ENCODE measurements at regions of chr7 and their contacts with region 1.

Region 1: DNA sequence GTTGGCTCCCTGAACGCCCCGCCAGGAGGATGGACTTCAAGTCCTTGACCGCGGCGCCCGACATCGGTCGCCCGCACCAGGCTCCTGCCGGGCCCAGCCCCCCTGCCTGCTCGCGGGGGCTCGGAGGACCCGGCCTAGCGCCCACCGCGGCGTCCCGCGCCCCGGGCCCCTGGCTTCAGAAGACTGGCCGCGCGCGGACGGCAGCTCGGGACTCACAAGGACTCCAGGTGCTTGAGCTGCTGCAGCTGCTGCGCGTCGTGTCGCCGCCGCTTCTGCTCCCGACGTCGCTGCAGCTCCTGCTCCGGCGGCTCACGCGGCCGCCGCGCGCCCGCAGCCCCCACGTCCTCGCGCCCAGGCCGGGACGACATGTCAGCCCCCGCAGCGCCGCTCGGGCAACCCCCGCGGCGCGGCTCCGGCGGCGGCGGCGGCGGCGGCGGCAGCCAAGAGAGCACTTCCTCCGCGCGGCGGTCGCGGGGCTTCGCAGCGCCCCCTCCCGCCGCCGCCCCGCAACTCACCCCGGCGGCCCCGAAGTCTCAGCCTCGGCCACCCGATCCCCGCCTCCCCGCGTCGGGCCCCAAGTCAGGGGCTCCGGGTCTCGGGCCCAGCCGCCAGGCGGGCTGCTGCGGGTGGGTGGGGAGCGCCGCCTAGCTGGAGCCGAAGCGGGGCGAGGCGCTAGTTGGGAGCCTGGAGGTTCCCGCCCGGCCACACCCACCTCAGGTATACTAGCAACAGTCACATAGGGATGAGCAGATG is at the start of gene RP9:
- DNase-seq: peak; percentile 91
- ATAC-seq: peak; percentile 88
- H3K4me3 ChIP-seq: peak within 1 kb of the TSS; percentile 63 to 94 (median 74)
- H3K4me3 Mint-ChIP-seq: peak within 1 kb of the TSS; percentile 95
- H3K27ac ChIP-seq: peak within 1 kb of the TSS; percentile 34 to 91
- H3K27ac Mint-ChIP-seq: peak within 1 kb of the TSS; percentile 79
- H3K4me1 ChIP-seq: peaks cover 42 to 45% of the 10 kb centered on the region in 2 donors
- H3K4me1 Mint-ChIP-seq: peaks cover 46% of the 10 kb centered on the region
- H3K27me3 ChIP-seq: peaks cover 0 to 4% (median 0%) of the 10 kb centered on the region in 4 experiments
- H3K27me3 Mint-ChIP-seq: peaks cover 14% of the 10 kb centered on the region
- CTCF ChIP-seq: peak; percentile 70
- total RNA-seq, gene RP9: 23.0 and 27.0 TPM in 2 replicates

Region 2: DNA sequence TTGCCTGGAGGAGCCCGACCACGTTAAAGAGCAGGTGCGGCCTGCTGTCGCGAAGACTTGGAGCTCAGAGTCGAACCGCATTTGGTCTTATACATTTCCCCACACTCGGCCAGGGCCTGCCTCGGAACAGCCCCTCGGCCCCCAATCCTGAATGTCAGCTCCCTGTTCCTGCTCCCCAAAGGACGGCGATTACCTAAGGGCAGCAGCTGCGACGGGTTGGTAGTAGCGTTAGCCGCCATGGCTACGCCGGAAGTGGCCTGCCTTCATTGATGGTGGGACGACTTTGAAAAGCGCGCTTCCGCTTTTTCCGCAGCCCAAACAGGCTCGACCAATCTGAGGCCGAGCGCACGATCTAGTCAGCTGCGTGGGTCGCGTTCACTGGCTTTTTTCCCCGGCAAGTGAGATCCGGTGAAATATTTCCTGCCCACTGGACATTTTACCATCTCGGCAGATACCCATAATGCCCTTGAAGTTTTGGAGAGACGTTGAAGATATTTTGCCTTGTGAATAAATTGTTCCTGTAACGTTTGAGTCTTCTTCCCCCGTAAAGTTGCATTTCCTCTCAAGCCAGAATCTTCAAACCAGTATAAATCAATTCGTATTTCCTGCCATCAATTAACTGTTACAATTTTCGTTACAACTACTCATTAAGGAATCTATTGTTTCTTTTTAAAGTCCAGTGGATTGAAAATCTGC is 618.9 kb before region 1 on chr7 and contains the start of gene LSM5:
- CTCF ChIA-PET with region 1: interaction called, 5 read pairs
- POLR2A ChIA-PET with region 1: interaction called, 12 read pairs
- intact Hi-C with region 1: loop called (anchors 2 kb)
- DNase-seq: peak; percentile 94
- ATAC-seq: peak; percentile 57
- H3K4me3 ChIP-seq: peak within 1 kb of the TSS; percentile 81 to 97 (median 91)
- H3K4me3 Mint-ChIP-seq: peak within 1 kb of the TSS; percentile 91
- H3K27ac ChIP-seq: peak within 1 kb of the TSS; percentile 78 to 87
- H3K27ac Mint-ChIP-seq: peak within 1 kb of the TSS; percentile 91
- H3K4me1 ChIP-seq: peaks cover 8 to 16% of the 10 kb centered on the region in 2 donors
- H3K4me1 Mint-ChIP-seq: peaks cover 28% of the 10 kb centered on the region
- H3K27me3 ChIP-seq: no peaks in the 10 kb centered on the region
- H3K27me3 Mint-ChIP-seq: no peaks in the 10 kb centered on the region
- CTCF ChIP-seq: no peak
- total RNA-seq, gene LSM5: 32.1 and 34.7 TPM in 2 replicates

Region 3: DNA sequence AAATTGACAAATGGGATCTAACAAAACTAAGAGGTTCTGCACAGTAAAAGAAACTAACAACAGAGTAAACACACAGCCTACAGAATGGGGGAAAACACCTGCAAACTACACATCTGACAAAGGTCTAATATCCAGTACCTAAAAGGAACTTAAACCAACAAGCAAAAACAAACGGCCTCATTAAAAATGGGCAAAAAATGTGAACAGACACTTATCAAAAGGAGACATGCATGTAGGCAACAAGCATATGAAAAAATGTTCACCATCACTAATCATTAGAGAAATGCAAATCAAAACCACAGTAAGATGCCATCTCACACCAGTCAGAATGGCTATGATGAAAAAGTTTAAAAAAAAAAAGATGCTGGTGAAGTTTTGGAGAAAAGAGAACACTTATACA is 415.0 kb before region 1 on chr7:
- CTCF ChIA-PET with region 1: interaction called, 10 read pairs
- POLR2A ChIA-PET with region 1: no interaction called
- intact Hi-C with region 1: loop called (anchors 2 kb)
- DNase-seq: no peak
- ATAC-seq: no peak
- H3K4me3 ChIP-seq: no peak overlapping the region
- H3K4me3 Mint-ChIP-seq: no peak overlapping the region
- H3K27ac ChIP-seq: no peak overlapping the region
- H3K27ac Mint-ChIP-seq: no peak overlapping the region
- H3K4me1 ChIP-seq: peaks cover 10 to 12% of the 10 kb centered on the region in 2 donors
- H3K4me1 Mint-ChIP-seq: peaks cover 16% of the 10 kb centered on the region
- H3K27me3 ChIP-seq: no peaks in the 10 kb centered on the region
- H3K27me3 Mint-ChIP-seq: no peaks in the 10 kb centered on the region
- CTCF ChIP-seq: no peak

Region 4: GRCh38 chr7:32803406-32804141 is 305.6 kb before region 1 on chr7:
- CTCF ChIA-PET with region 1: interaction called, 32 read pairs
- POLR2A ChIA-PET with region 1: no interaction called
- intact Hi-C with region 1: no loop called
- DNase-seq: no peak
- ATAC-seq: no peak
- H3K4me3 ChIP-seq: no peak overlapping the region
- H3K4me3 Mint-ChIP-seq: no peak overlapping the region
- H3K27ac ChIP-seq: no peak overlapping the region
- H3K27ac Mint-ChIP-seq: no peak overlapping the region
- H3K4me1 ChIP-seq: no peaks in the 10 kb centered on the region
- H3K4me1 Mint-ChIP-seq: peaks cover 2% of the 10 kb centered on the region
- H3K27me3 ChIP-seq: peaks cover 0 to 3% (median 0%) of the 10 kb centered on the region in 4 experiments
- H3K27me3 Mint-ChIP-seq: no peaks in the 10 kb centered on the region
- CTCF ChIP-seq: no peak

Region 5: GRCh38 chr7:32891800-32892520 is 217.2 kb before region 1 on chr7:
- CTCF ChIA-PET with region 1: interaction called, 8 read pairs
- POLR2A ChIA-PET with region 1: interaction called, 3 read pairs
- intact Hi-C with region 1: loop called (anchors 1 kb)
- DNase-seq: peak; percentile 99
- ATAC-seq: peak; percentile 64
- H3K4me3 ChIP-seq: peak overlapping the region; percentile 18 to 82 (median 74)
- H3K4me3 Mint-ChIP-seq: peak overlapping the region; percentile 87
- H3K27ac ChIP-seq: peak overlapping the region; percentile 98 to 100
- H3K27ac Mint-ChIP-seq: peak overlapping the region; percentile 96
- H3K4me1 ChIP-seq: peaks cover 36 to 39% of the 10 kb centered on the region in 2 donors
- H3K4me1 Mint-ChIP-seq: peaks cover 46% of the 10 kb centered on the region
- H3K27me3 ChIP-seq: no peaks in the 10 kb centered on the region
- H3K27me3 Mint-ChIP-seq: peaks cover 2% of the 10 kb centered on the region
- CTCF ChIP-seq: no peak

Region 6: DNA sequence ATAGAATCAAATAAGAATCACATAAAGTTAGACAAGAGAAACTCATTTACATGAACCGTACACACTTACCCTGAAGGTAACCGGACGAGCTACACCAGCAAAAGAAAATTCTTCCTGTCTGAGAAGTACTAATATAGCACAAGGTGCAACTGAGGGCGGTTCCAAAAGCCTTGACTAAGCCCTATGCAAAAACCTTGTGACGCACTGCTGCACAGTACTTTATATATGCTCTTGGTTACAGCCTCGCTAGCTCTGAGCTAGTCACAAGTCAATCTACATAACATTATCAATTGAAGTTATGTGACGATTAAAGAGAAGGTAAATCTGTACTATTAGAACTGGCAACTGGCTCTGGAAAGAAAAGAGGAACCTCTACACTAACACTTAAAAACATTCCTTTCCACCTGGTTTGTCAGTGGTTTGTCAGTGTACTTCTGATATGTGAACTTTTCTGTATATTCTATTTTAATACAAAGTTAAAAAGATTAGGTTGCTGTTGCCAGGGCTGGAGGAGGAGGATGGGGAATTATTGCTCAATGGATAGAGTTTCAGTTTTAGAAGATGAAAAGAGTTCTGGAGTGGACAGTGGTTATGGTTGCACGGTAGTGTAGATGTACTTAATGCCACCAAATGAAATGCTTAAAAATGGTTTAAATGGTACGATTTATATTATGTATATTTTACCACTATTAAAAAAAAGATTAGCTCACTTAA is 68.2 kb before region 1 on chr7:
- CTCF ChIA-PET with region 1: interaction called, 26 read pairs
- POLR2A ChIA-PET with region 1: no interaction called
- intact Hi-C with region 1: loop called (anchors 2 kb)
- DNase-seq: peak; percentile 85
- ATAC-seq: peak; percentile 96
- H3K4me3 ChIP-seq: peak overlapping the region; percentile 26 to 79 (median 44)
- H3K4me3 Mint-ChIP-seq: peak overlapping the region; percentile 84
- H3K27ac ChIP-seq: peak overlapping the region; percentile 2 to 73
- H3K27ac Mint-ChIP-seq: peak overlapping the region; percentile 86
- H3K4me1 ChIP-seq: peaks cover 21 to 40% of the 10 kb centered on the region in 2 donors
- H3K4me1 Mint-ChIP-seq: peaks cover 67% of the 10 kb centered on the region
- H3K27me3 ChIP-seq: no peaks in the 10 kb centered on the region
- H3K27me3 Mint-ChIP-seq: no peaks in the 10 kb centered on the region
- CTCF ChIP-seq: no peak

Region 7: DNA sequence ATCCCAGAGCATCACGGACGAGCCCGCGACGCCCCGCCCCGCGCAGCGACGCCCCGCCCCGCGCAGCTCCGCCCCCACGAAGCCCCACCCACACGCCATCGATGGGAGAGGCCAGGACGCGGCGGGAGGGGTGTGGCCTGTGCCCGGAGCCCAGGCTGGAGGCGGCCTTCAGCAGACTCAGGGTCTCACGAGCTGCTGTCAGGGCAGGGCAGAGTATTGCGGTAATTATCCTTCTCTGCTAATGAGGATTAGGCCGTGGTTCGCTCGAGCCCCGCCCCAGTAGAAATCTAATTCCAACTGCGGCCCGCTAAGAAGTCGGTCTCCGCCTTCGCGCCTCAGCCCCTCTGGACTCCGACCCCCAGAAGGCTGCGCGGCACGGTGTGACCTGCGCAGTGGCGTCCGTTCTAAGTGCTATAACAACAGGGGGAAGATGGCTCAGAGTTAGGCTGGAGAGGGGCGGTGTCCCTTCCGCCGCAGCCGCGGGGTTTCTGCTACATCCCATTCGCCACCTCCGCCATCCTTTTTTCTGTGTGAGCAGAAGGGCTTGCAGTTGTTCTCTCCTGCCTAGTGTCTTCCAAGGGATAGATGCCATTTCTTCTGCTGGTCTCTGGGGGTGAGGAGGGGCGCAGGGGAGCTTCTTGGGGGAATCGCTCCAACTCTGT is 46.3 kb before region 1 on chr7:
- CTCF ChIA-PET with region 1: interaction called, 38 read pairs
- POLR2A ChIA-PET with region 1: interaction called, 13 read pairs
- intact Hi-C with region 1: loop called (anchors 1 kb)
- DNase-seq: peak; percentile 98
- ATAC-seq: peak; percentile 93
- H3K4me3 ChIP-seq: peak overlapping the region; percentile 19 to 92 (median 75)
- H3K4me3 Mint-ChIP-seq: peak overlapping the region; percentile 91
- H3K27ac ChIP-seq: peak overlapping the region; percentile 68 to 79
- H3K27ac Mint-ChIP-seq: peak overlapping the region; percentile 94
- H3K4me1 ChIP-seq: peaks cover 30% of the 10 kb centered on the region in 2 donors
- H3K4me1 Mint-ChIP-seq: peaks cover 39% of the 10 kb centered on the region
- H3K27me3 ChIP-seq: no peaks in the 10 kb centered on the region
- H3K27me3 Mint-ChIP-seq: no peaks in the 10 kb centered on the region
- CTCF ChIP-seq: no peak